Activated CD4-positive, alpha-beta T cell treated with anti-CD3 and anti-CD28 coated beads for 36 hours (primary cell): ENCODE measurements at regions of chr1 and their contacts with region 1.

Region 1: DNA sequence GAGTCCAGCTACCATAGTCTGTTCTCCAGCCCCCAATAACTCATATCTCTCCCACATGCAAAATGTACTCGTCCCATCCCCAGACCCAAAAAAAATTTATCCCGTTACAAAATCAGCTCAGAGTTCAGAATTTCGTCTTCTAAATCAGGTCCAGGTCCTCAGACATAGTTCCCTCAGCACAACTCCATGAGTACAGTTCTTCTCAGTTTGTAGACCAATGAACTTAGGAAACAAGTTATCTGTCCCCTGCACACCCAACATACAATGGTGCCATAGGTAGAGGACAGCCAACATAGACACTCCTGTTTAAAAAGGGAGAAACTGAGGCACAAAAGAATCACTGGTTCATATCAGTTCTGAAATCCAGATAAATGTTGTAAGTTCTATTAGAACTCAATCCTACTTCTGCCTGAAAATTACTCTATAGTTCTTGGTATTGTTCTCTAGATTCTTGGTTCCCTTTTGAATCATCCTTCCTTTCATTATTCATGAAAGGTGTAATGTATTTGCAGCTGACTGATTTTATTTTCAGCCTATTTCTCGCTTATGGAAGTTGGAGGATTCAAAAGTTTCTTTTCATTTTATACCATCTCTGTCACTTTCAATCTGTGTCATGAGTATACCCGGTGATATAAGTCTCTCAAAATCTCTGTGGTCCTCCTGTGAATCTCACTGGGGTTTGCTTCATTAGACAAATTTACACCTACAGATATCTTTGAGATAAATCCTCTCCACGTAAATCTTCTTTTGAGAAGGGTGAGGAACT is 75.8 kb upstream of the TSPAN2 start:
- DNase-seq: no peak
- ATAC-seq: peak; percentile 64
- H3K4me3 Mint-ChIP-seq: no peak overlapping the region
- H3K27ac Mint-ChIP-seq: no peak overlapping the region
- H3K4me1 Mint-ChIP-seq: peaks cover 3% of the 10 kb centered on the region
- H3K27me3 Mint-ChIP-seq: peaks cover 32% of the 10 kb centered on the region

Region 2: DNA sequence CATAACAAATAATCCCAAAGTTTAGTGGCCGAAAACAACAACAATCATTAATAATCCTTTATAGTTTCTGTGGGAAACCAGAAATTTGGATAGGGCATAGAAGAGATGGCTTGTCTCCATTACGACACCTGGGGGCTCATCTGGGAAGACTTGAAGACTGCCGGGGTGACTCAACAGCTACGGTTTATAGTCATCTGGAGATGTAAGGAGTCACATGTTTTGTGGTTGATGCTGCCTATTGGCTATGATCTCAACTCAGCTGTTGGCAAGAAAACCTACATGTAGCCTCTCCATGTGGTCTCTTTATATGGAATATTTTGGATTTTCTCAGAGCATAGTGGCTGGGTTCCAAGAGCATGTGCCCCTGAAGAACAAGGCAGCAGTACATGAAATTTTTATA is 46.5 kb before region 1 on chr1:
- CTCF ChIA-PET with region 1: no interaction called
- POLR2A ChIA-PET with region 1: no interaction called
- intact Hi-C with region 1: no loop called
- DNase-seq: no peak
- ATAC-seq: no peak
- H3K4me3 Mint-ChIP-seq: no peak overlapping the region
- H3K27ac Mint-ChIP-seq: no peak overlapping the region
- H3K4me1 Mint-ChIP-seq: no peaks in the 10 kb centered on the region
- H3K27me3 Mint-ChIP-seq: peaks cover 9% of the 10 kb centered on the region

Region 3: DNA sequence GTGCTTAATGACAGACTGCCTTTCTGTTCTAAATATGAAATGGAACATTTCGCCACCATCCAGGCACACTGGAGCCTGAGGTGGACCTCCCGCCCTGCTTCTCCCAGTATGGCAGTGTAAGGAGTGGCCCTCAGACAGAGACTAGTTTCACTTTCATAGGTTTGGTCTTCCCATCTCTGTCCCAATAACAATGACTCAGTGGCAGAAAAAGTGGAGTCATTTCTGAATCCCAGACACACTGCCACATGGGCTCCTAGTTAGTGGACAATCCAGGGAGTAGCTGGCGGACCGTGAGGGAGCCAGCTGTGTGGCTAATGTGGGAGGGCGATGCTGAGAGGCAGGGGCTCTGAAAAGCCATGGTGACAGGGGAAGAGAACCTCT is 19.8 kb after region 1 on chr1:
- CTCF ChIA-PET with region 1: no interaction called
- POLR2A ChIA-PET with region 1: no interaction called
- intact Hi-C with region 1: loop called in 1 of 2 experiments (anchors 1 kb)
- DNase-seq: no peak
- ATAC-seq: no peak
- H3K4me3 Mint-ChIP-seq: no peak overlapping the region
- H3K27ac Mint-ChIP-seq: peak overlapping the region; percentile 23
- H3K4me1 Mint-ChIP-seq: peaks cover 8% of the 10 kb centered on the region
- H3K27me3 Mint-ChIP-seq: no peaks in the 10 kb centered on the region